Calu3 (cell line): ENCODE measurements at regions of chr18 and their contacts with region 1.

Region 1: DNA sequence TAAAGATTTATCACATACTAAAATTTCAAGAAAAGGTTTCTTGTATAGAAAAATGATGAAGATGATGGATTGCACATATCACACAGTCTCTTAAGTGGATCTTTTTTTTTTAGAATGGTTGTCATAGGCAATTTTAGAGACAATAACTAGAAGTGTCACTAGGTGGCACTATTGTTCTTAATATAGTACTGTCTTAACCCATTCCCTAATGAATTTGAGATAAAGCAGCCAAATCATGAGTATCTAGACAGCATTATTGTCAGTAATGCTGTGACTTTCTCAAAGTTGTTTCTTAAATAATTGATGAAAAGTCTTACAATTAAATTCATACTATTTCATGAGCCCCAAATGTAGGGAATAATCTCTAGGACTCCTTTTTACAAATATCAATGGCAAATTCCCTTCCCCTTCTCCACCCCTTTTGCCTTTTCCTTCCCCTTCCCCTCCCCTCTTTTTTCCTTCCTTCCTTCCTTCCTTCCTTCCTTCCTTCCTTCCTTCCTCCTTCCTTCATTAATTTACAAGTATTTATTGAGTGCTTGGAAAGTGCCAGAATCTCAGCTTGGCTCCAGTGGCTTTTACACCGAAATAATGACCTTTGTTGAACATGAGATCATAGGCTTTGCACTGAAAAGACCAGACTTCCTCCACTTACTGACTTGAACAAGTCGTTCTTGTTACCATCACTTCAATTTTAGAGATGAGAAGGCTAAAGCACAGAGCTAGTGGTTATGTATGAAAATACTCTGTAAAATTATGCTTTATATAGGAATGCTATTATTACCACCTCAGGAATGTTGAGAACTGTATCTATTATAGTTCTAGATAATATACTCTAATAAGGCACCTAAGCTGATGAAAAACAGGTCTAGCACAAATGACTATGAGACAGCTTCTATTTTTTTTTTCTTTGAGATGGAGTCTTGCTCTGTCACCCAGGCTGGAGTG is 19.8 kb downstream of the MYL12B start:
- DNase-seq: no peak
- H3K4me3 Mint-ChIP-seq: no peak overlapping the region
- H3K27ac Mint-ChIP-seq: peak overlapping the region; percentile 5
- H3K4me1 Mint-ChIP-seq: peaks cover 21% of the 10 kb centered on the region
- H3K27me3 Mint-ChIP-seq: no peaks in the 10 kb centered on the region
- CTCF ChIP-seq: peak; percentile 31

Region 2: GRCh38 chr18:3297025-3297984 is 15.6 kb after region 1 on chr18:
- CTCF ChIA-PET with region 1: interaction called, 16 read pairs
- intact Hi-C with region 1: no loop called
- DNase-seq: peak; percentile 94
- H3K4me3 Mint-ChIP-seq: peak overlapping the region; percentile 91
- H3K27ac Mint-ChIP-seq: peak overlapping the region; percentile 77
- H3K4me1 Mint-ChIP-seq: peaks cover 8% of the 10 kb centered on the region
- H3K27me3 Mint-ChIP-seq: peaks cover 16% of the 10 kb centered on the region
- CTCF ChIP-seq: peak; percentile 50

Region 3: DNA sequence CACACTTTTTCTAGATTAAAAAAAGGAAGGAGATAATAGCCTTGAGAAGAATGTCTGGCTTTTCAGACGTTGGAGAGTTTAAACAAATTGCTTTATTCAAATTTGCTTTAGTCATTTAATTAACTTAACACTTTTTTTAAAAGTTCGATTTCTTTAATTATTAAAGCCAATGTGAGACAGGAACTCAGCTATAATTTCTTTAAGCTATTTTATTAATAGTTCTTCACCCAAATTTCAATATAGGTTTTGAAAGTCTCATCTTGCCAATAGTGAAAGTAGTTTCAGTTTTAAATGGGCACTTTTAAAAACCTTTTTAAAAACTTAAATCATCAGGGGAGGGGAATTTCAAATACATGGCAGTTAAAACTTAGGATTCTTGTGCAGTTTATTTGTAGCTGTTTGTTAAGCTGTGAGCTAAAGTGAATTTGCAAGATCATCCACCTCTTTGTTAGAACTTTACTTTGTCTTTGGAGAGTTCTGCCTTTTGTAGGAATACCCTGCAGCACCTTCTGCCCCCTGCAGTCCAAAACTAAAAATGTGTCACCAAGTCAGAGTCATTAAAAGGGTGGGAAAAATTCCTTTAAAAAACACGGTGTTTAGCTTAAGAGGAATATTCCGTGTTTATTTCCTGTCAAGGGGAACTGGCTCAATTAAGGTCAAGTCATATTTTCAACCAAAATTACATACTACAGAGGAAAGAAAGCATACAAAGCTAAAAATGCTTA is 172.8 kb after region 1 on chr18:
- CTCF ChIA-PET with region 1: interaction called, 8 read pairs
- intact Hi-C with region 1: loop called (anchors 1 kb)
- DNase-seq: peak; percentile 62
- H3K4me3 Mint-ChIP-seq: peak overlapping the region; percentile 92
- H3K27ac Mint-ChIP-seq: peak overlapping the region; percentile 95
- H3K4me1 Mint-ChIP-seq: peaks cover 37% of the 10 kb centered on the region
- H3K27me3 Mint-ChIP-seq: no peaks in the 10 kb centered on the region
- CTCF ChIP-seq: peak; percentile 71

Region 4: DNA sequence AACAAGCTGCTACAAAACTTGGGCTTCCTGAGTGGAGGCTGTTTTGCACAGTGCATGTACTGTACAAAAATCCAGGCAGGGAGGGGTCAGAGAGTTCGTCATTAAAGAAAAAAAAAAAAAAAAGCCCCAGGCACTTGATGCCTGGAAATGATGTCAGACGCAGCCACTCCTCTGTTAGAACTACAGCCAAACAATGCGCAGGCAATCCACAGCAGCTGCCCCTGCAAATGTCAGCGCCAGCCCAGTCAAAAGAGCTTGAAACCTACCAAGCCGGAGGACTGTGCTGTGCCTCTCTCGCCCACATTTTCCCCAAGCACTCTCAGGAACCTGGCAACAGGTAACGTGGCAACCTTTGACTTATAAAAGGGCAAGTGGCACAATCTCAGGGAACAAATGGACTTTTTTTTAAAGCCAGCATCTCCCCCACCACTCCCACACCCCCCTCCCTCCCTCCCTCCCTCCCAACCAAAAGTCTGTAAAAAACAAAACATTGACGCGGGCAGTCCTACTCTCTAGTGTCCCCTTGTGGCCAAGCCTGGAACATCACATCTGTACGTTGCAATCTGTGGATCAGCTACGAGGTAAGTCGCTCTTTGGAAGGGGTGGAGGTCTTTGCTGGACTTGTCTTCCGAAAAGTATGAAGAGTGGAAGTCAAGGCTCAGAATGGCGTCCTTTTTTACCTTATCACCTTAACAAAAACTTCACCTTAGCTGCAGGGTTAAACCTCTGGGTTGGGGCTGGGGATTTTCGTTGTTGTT is 312.4 kb after region 1 on chr18:
- CTCF ChIA-PET with region 1: interaction called, 9 read pairs
- intact Hi-C with region 1: loop called (anchors 2 kb)
- DNase-seq: peak; percentile 84
- H3K4me3 Mint-ChIP-seq: peak overlapping the region; percentile 80
- H3K27ac Mint-ChIP-seq: peak overlapping the region; percentile 99
- H3K4me1 Mint-ChIP-seq: peaks cover 63% of the 10 kb centered on the region
- H3K27me3 Mint-ChIP-seq: no peaks in the 10 kb centered on the region
- CTCF ChIP-seq: peak; percentile 87

Region 5: GRCh38 chr18:3771121-3771971 is 489.6 kb after region 1 on chr18:
- CTCF ChIA-PET with region 1: no interaction called
- intact Hi-C with region 1: loop called (anchors 5 kb)
- DNase-seq: peak; percentile 96
- H3K4me3 Mint-ChIP-seq: peak overlapping the region; percentile 74
- H3K27ac Mint-ChIP-seq: peak overlapping the region; percentile 55
- H3K4me1 Mint-ChIP-seq: peaks cover 39% of the 10 kb centered on the region
- H3K27me3 Mint-ChIP-seq: no peaks in the 10 kb centered on the region
- CTCF ChIP-seq: peak; percentile 97

Region 6: DNA sequence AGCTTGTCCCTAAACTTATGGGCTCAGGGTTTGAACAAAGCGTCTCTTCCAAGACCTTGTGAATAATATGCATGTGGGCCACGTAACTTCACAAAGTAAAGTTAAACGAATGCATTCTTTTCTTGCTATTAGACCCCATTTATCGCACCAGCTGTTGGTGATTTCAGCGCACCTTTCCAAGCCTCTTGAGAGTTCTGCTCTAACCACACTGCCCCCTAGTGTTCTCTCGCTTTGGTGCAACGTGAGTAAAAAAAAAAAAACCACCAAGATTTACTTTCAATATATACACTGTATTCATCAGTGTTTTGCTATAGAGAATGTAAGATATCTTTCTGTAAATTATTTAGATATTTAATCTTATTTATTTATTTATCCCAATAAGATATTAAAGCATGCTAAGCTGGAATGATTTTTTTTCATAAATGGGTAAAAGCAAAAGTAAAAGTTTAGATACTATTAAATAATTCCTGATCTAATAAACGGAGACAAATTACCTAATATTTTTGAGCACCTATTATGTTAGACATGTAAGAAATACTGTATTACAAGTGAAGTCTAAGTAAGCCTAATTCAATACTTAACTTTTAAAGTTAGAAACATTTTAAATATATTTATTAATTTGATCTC is 713.9 kb after region 1 on chr18:
- CTCF ChIA-PET with region 1: no interaction called
- intact Hi-C with region 1: loop called (anchors 1 kb)
- DNase-seq: peak; percentile 64
- H3K4me3 Mint-ChIP-seq: no peak overlapping the region
- H3K27ac Mint-ChIP-seq: no peak overlapping the region
- H3K4me1 Mint-ChIP-seq: no peaks in the 10 kb centered on the region
- H3K27me3 Mint-ChIP-seq: no peaks in the 10 kb centered on the region
- CTCF ChIP-seq: peak; percentile 86